ENCODE measurements at regions of chr9 and their contacts with region 1.

Region 1: DNA sequence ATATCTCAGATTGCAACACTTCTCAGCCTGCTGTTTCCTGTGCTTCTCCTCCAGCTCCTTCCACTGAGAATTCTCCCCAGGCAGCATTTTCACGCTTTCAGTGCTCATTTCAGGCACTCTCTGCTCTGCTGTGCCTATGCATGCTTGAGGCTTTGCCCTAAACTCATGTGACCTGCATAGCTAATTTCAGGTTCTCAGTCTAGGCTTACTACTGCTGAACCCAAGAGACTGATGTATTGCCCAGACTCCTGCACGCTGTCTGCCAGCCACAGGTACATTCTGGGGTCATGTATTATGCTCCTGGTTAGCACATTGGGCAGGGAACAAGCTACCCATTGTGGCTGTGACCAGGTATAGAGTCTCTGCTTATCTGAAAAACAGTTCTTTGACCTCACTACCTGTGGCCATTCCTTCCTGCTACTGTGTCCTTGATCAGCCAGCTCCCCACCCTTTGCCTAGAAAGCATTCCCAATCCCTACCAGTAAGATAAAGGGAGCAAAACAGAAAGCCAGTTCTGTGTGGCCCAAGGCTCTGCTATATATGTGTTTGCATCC is 34.7 kb downstream of the PIP5K1B start:
- DNase-seq: no peak
- ATAC-seq: no peak
- H3K4me3 ChIP-seq: no peak overlapping the region
- H3K27ac ChIP-seq: no peak overlapping the region
- H3K4me1 ChIP-seq: no peaks in the 10 kb centered on the region
- H3K27me3 ChIP-seq: peaks cover 37% of the 10 kb centered on the region
- CTCF ChIP-seq: no peak
- POLR2A ChIP-seq: no peak
- RAD21 ChIP-seq: no peak

Region 2: DNA sequence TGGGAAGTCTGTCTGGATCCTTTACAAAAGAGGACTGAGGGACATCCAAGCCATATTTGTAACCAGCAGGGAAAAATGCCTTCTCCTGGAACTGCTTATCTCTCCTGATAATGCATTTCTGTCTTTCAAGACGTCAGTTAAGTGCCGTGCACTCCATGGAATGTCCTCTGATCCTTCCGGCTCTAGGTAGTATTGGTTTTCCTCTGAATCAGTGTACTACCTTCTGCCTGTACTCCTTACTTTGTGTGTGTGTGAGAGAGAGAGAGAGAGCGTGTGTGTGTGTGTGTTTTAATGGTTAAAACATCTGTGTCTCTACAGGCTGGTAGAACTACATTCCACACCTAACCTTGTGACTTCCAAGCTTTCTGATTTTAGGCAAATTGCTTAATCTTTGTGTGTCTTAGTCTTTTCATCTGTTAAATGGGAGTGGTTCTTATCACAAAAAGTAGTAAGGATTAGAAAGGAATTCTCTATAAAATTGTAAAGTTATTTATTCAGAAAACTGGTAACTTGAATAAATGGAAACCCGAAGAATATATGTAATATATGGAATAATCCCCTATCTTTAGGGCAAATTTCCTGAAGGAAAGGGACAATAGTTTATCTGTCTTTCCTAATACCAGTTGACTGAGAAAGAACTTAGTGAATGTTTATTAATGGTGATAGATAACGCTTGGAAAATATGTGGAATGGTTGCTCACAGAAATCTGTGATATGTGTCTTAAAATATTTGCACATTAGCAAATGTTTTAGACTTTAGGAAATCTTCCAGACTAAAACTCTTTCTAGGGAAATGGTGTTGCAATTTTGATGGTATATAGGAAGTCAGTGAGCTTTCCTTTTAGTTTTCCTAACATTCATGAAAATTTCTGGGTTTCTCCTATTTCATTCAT is 55.4 kb after region 1 on chr9:
- CTCF ChIA-PET with region 1: no interaction called
- POLR2A ChIA-PET with region 1: no interaction called
- RAD21 ChIA-PET with region 1: no interaction called
- intact Hi-C with region 1: loop called (anchors 5 kb)
- DNase-seq: no peak
- ATAC-seq: no peak
- H3K4me3 ChIP-seq: no peak overlapping the region
- H3K27ac ChIP-seq: no peak overlapping the region
- H3K4me1 ChIP-seq: no peaks in the 10 kb centered on the region
- H3K27me3 ChIP-seq: peaks cover 46% of the 10 kb centered on the region
- CTCF ChIP-seq: no peak
- POLR2A ChIP-seq: no peak
- RAD21 ChIP-seq: no peak

Region 3: DNA sequence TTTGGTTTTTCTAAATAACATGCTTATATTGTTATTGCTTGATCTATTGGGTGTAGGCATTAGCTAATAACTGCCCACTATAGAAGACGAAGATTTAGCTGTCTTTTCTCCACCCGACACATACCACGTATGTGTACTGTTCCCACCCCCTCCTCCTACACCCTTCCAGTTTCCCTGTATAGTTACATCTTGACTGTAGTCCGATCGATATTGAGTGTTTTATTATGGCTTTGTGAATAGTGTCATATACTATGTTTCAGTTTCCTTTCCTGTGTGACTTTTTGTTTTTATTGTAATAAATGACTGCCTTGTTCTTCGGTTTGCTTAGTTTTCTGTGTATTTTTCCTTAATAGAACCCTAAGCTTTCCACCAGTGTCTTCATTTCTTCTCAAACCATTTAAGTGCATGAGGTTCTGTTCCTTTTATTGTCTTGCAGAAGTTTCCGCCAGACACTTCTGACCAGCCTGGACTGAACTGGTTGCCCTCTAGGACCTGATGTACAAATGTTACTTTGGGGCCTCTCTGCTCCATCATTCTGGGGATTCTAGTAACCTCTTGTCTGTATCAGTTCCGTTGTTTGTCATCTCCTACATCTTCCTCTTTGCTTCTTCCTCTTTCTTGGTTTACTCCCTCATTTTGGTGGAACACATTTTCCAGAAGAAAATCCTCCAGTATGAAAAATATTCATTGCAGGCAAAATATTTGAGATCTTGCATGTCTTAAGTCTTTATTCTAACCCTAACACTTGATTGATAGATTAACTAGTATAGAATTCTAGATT is 212.4 kb after region 1 on chr9:
- CTCF ChIA-PET with region 1: no interaction called
- POLR2A ChIA-PET with region 1: no interaction called
- RAD21 ChIA-PET with region 1: no interaction called
- intact Hi-C with region 1: no loop called
- DNase-seq: no peak
- ATAC-seq: no peak
- H3K4me3 ChIP-seq: no peak overlapping the region
- H3K27ac ChIP-seq: no peak overlapping the region
- H3K4me1 ChIP-seq: no peaks in the 10 kb centered on the region
- H3K27me3 ChIP-seq: peaks cover 38% of the 10 kb centered on the region
- CTCF ChIP-seq: no peak
- POLR2A ChIP-seq: no peak
- RAD21 ChIP-seq: no peak

Measured in HCT116 (cell line).